Ascending aorta (tissue), 2 donors: ENCODE measurements at regions of chr10 and their contacts with region 1.

Region 1: GRCh38 chr10:96395931-96396877 is 37.4 kb upstream of the OPALIN start:
- DNase-seq: peak in 1 of 2 donors; percentile 72
- H3K4me3 ChIP-seq: no peak overlapping the region
- H3K27ac ChIP-seq: no peak overlapping the region
- H3K4me1 ChIP-seq: no peaks in the 10 kb centered on the region
- H3K27me3 ChIP-seq: no peaks in the 10 kb centered on the region
- CTCF ChIP-seq: peak; percentile 54 to 77 (median 64)

Region 2: GRCh38 chr10:96478317-96478716 is 82.1 kb after region 1 on chr10:
- intact Hi-C with region 1: no loop called
- DNase-seq: no peak
- H3K4me3 ChIP-seq: no peak overlapping the region
- H3K27ac ChIP-seq: no peak overlapping the region
- H3K4me1 ChIP-seq: no peaks in the 10 kb centered on the region
- H3K27me3 ChIP-seq: no peaks in the 10 kb centered on the region
- CTCF ChIP-seq: no peak

Region 3: GRCh38 chr10:96743988-96744585 is 347.9 kb after region 1 on chr10:
- intact Hi-C with region 1: loop called (anchors 10 kb)
- DNase-seq: no peak
- H3K4me3 ChIP-seq: no peak overlapping the region
- H3K27ac ChIP-seq: no peak overlapping the region
- H3K4me1 ChIP-seq: no peaks in the 10 kb centered on the region
- H3K27me3 ChIP-seq: no peaks in the 10 kb centered on the region
- CTCF ChIP-seq: no peak